Activated B cell treated with CpG ODN at 0.5 μM for 24 hours (primary cell): ENCODE measurements at regions of chr14 and their contacts with region 1.

Region 1: GRCh38 chr14:91177073-91178034 is 63.5 kb downstream of the DGLUCY start:
- DNase-seq: peak; percentile 29
- ATAC-seq: peak; percentile 80
- H3K4me3 Mint-ChIP-seq: no peak overlapping the region
- H3K27ac Mint-ChIP-seq: no peak overlapping the region
- H3K4me1 Mint-ChIP-seq: peaks cover 5% of the 10 kb centered on the region
- H3K27me3 Mint-ChIP-seq: no peaks in the 10 kb centered on the region
- CTCF ChIP-seq: peak; percentile 55

Region 2: DNA sequence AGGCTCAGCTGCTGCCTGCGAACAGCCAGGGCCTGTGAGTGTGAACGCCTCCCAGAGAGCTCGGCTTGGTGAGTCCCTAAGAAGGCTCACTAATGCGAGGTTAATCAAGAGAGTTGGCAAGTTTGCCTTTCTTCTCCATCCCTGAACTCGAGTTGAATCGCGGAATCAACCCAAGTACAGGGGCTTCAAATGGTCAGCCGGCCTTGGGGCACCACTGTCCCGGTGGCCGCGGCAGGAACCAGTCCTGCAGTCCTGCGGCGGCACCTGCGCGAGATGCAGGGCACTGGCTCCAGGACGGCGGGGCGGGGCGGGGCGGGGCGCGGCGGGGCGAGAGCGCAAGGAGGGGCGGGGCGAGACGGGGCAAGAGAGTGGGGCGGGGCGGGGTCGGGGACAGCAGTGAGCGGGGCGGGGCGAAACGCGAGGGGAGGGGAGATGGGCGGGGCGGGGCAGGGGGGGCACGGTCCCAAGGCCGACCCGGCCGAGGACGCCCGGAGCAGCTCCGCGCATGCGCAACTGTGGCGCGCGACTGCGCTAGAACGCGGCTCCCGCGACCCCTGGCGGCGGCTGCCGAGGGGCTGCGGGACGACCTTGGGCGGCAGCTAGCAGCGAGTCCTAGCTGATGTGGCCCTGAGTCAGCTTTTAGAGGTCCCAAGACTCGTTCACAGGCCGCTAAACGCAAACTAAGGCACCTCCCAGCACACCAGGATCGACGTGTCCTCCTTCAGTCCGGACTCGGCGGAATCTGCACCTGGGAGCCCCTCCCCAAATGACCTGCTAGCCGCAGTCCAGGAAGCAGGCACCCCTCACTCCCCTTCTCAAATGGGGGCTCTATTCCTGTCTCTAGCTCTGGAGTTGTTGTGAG is 419.1 kb before region 1 on chr14:
- CTCF ChIA-PET with region 1: no interaction called
- POLR2A ChIA-PET with region 1: no interaction called
- intact Hi-C with region 1: loop called (anchors 2 kb)
- DNase-seq: peak; percentile 95
- ATAC-seq: peak; percentile 88
- H3K4me3 Mint-ChIP-seq: peak overlapping the region; percentile 79
- H3K27ac Mint-ChIP-seq: peak overlapping the region; percentile 86
- H3K4me1 Mint-ChIP-seq: peaks cover 24% of the 10 kb centered on the region
- H3K27me3 Mint-ChIP-seq: peaks cover 2% of the 10 kb centered on the region
- CTCF ChIP-seq: no peak

Region 3: GRCh38 chr14:90911121-90911520 is 266.2 kb before region 1 on chr14:
- CTCF ChIA-PET with region 1: interaction called, 14 read pairs
- POLR2A ChIA-PET with region 1: no interaction called
- intact Hi-C with region 1: no loop called
- DNase-seq: no peak
- ATAC-seq: no peak
- H3K4me3 Mint-ChIP-seq: no peak overlapping the region
- H3K27ac Mint-ChIP-seq: peak overlapping the region; percentile 47
- H3K4me1 Mint-ChIP-seq: peaks cover 15% of the 10 kb centered on the region
- H3K27me3 Mint-ChIP-seq: no peaks in the 10 kb centered on the region
- CTCF ChIP-seq: no peak

Region 4: GRCh38 chr14:90940318-90940962 is 236.9 kb before region 1 on chr14:
- CTCF ChIA-PET with region 1: no interaction called
- POLR2A ChIA-PET with region 1: no interaction called
- intact Hi-C with region 1: no loop called
- DNase-seq: no peak
- ATAC-seq: no peak
- H3K4me3 Mint-ChIP-seq: no peak overlapping the region
- H3K27ac Mint-ChIP-seq: no peak overlapping the region
- H3K4me1 Mint-ChIP-seq: no peaks in the 10 kb centered on the region
- H3K27me3 Mint-ChIP-seq: no peaks in the 10 kb centered on the region
- CTCF ChIP-seq: no peak

Region 5: GRCh38 chr14:91138511-91139359 is 38.6 kb before region 1 on chr14:
- CTCF ChIA-PET with region 1: interaction called, 13 read pairs
- POLR2A ChIA-PET with region 1: no interaction called
- intact Hi-C with region 1: loop called (anchors 1 kb)
- DNase-seq: no peak
- ATAC-seq: peak; percentile 29
- H3K4me3 Mint-ChIP-seq: no peak overlapping the region
- H3K27ac Mint-ChIP-seq: peak overlapping the region; percentile 69
- H3K4me1 Mint-ChIP-seq: peaks cover 32% of the 10 kb centered on the region
- H3K27me3 Mint-ChIP-seq: no peaks in the 10 kb centered on the region
- CTCF ChIP-seq: no peak

Region 6: DNA sequence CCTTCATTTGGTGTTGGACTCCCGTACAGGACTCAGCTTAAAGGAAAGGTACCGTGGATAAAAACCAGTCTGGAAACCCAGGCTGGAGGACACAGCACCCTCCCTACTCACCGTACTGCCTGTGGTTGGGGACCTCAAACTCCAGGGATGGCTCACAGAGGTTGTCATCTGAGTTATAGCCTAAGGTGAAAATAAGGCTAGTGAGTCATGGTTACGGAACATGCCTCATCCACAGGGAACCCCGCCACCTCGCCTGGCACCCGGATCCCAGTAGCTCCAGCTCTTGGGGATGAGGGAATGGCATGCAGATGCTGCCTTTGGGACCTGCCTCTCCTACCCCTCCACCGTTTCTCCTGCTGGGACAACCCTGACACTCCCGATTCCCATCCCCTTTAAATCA is 104.0 kb after region 1 on chr14:
- CTCF ChIA-PET with region 1: interaction called, 265 read pairs
- POLR2A ChIA-PET with region 1: interaction called, 10 read pairs
- intact Hi-C with region 1: loop called (anchors 1 kb)
- DNase-seq: no peak
- ATAC-seq: no peak
- H3K4me3 Mint-ChIP-seq: no peak overlapping the region
- H3K27ac Mint-ChIP-seq: no peak overlapping the region
- H3K4me1 Mint-ChIP-seq: peaks cover 21% of the 10 kb centered on the region
- H3K27me3 Mint-ChIP-seq: no peaks in the 10 kb centered on the region
- CTCF ChIP-seq: no peak

Region 7: DNA sequence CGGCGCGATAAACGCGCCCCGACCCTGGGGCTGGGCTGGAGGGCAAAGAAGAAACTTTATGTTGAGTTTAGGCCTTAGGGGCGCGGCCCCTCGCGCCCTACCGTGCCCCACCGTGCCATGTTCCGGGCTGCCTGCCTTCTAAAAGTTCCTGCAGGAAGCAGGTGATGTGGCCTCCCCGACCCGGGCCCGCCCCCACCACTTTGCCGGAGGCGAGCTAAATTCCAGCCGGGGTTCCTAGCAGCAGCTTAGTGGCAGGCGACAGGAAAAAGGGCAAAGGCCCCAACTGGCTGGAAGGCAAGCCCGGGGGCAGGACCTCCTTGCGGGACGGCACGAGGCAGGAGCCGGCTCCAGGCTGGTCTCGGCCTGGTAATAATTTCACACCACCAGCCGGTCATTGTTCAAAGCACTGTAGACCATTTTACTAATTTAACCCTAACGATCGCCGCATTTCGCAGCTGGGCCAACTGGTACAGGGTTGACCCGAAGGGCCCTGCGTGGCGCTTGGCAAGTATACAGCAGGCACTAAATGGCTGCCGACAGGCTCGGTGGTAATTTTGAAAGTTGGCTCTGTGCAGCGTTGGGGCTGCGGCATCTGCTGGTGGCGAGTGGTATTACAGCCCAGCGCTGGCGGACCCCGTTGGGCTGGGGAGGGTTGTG is 241.2 kb after region 1 on chr14:
- CTCF ChIA-PET with region 1: interaction called, 3 read pairs
- POLR2A ChIA-PET with region 1: interaction called, 3 read pairs
- intact Hi-C with region 1: loop called (anchors 1 kb)
- DNase-seq: peak; percentile 84
- ATAC-seq: peak; percentile 37
- H3K4me3 Mint-ChIP-seq: peak overlapping the region; percentile 81
- H3K27ac Mint-ChIP-seq: peak overlapping the region; percentile 93
- H3K4me1 Mint-ChIP-seq: peaks cover 42% of the 10 kb centered on the region
- H3K27me3 Mint-ChIP-seq: no peaks in the 10 kb centered on the region
- CTCF ChIP-seq: peak; percentile 36

Region 8: DNA sequence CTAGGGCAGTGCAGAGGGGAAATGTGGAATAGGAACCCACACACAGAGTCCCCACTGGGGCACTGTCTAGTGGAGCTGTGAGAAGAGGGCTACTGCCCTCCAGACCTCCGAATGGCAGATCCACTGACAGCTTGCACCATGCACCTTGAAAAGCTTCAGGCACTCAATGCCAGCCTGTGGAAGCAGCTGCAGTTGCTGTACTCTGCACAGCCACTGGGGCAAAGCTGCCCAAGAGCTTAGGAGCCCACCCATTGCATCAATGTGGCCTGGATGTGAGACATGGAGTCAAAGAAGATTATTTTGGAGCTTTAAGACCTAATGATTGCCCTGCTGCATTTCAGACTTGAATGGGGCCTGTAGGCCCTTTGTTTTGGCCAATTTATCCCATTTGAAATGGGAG is 262.0 kb after region 1 on chr14:
- CTCF ChIA-PET with region 1: no interaction called
- POLR2A ChIA-PET with region 1: no interaction called
- intact Hi-C with region 1: no loop called
- DNase-seq: no peak
- ATAC-seq: no peak
- H3K4me3 Mint-ChIP-seq: no peak overlapping the region
- H3K27ac Mint-ChIP-seq: no peak overlapping the region
- H3K4me1 Mint-ChIP-seq: peaks cover 3% of the 10 kb centered on the region
- H3K27me3 Mint-ChIP-seq: peaks cover 9% of the 10 kb centered on the region
- CTCF ChIP-seq: no peak